CD4-positive, alpha-beta memory T cell (primary cell): ENCODE measurements at regions of chr11 and their contacts with region 1.

Region 1: DNA sequence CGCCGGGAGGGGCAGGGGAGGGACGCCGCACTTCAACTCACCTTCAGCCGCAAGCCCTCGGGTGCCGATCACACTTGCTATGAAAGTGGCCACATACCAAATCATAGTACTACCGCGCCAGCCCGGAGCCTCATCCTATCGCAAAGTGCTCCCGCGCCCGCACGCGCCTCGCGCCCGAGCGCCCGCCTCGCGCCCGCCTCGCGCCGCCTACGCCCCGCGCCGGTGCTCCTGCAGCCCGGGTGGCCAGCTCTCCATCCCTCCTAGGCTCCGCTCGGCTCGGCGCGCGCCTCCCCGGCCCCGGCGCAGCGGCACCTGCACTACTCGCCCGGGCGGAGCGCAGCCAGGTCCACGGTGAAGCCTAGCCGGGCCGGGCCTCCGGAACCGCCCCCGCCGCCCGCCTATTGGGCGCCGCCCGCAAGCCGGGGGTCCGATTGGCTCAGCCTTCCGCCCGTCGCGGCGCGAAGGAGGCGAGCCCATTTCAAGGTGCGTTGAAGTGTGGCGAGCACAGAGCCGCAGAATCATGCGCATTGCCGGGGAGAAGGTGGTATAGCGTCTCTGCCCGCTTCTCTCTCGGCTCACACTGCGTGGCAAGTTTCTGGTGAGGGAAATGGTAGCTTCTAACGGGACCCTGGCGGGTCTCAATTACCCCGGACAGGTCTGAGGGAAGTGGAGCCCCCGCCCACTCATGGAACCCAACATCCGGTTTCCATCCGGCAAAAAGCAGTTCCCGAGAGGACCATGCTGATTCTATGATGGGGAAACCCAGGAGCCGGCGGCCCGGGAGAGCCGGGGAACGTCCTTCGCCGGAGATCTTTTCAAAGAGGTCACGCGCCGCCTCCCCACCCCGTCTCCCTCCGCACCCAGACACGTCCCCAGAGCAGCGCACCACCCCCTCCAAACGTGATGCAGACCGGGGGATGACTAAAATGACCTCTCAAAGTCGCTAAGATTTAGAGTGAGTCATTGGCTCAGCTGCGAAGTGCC is at the start of gene IGSF9B:
- DNase-seq: peak; percentile 89 to 96 (median 92)
- H3K4me3 ChIP-seq: peak within 1 kb of the TSS; percentile 57 to 95
- H3K4me3 Mint-ChIP-seq: peak within 1 kb of the TSS; percentile 89 to 95 (median 92)
- H3K27ac ChIP-seq: peak within 1 kb of the TSS; percentile 58
- H3K27ac Mint-ChIP-seq: peak within 1 kb of the TSS; percentile 84 to 94 (median 90)
- H3K4me1 ChIP-seq: peaks cover 38% of the 10 kb centered on the region
- H3K4me1 Mint-ChIP-seq: peaks cover 24 to 48% (median 40%) of the 10 kb centered on the region in 4 donors
- H3K27me3 ChIP-seq: peaks cover 5% of the 10 kb centered on the region
- H3K27me3 Mint-ChIP-seq: peaks cover 7 to 10% of the 10 kb centered on the region in 2 donors
- total RNA-seq, gene IGSF9B: 36.0 to 38.6 TPM

Region 2: GRCh38 chr11:133966921-133967598 is 10.1 kb after region 1 on chr11:
- CTCF ChIA-PET with region 1: no interaction called
- POLR2A ChIA-PET with region 1: interaction called, 3 read pairs
- intact Hi-C with region 1: loop called (anchors 1 kb)
- DNase-seq: peak; percentile 48 to 64 (median 58)
- H3K4me3 ChIP-seq: peak overlapping the region; percentile 52 to 62
- H3K4me3 Mint-ChIP-seq: peak overlapping the region; percentile 84 to 98 (median 93)
- H3K27ac ChIP-seq: no peak overlapping the region
- H3K27ac Mint-ChIP-seq: peak overlapping the region in 5 of 7 donors; percentile 62 to 95 (median 92)
- H3K4me1 ChIP-seq: peaks cover 8% of the 10 kb centered on the region
- H3K4me1 Mint-ChIP-seq: peaks cover 6 to 13% (median 11%) of the 10 kb centered on the region in 4 donors
- H3K27me3 ChIP-seq: no peaks in the 10 kb centered on the region
- H3K27me3 Mint-ChIP-seq: peaks cover 4 to 8% of the 10 kb centered on the region in 2 donors

Region 3: GRCh38 chr11:134033696-134034491 is 77.0 kb after region 1 on chr11:
- CTCF ChIA-PET with region 1: no interaction called
- POLR2A ChIA-PET with region 1: interaction called, 23 read pairs
- intact Hi-C with region 1: no loop called
- DNase-seq: peak; percentile 36 to 75 (median 50)
- H3K4me3 ChIP-seq: peak overlapping the region in 1 of 2 donors; percentile 29
- H3K4me3 Mint-ChIP-seq: peak overlapping the region in 7 of 8 donors; percentile 57 to 87 (median 70)
- H3K27ac ChIP-seq: peak overlapping the region; percentile 5
- H3K27ac Mint-ChIP-seq: peak overlapping the region; percentile 59 to 87 (median 67)
- H3K4me1 ChIP-seq: peaks cover 50% of the 10 kb centered on the region
- H3K4me1 Mint-ChIP-seq: peaks cover 27 to 70% (median 45%) of the 10 kb centered on the region in 4 donors
- H3K27me3 ChIP-seq: no peaks in the 10 kb centered on the region
- H3K27me3 Mint-ChIP-seq: no peaks in the 10 kb centered on the region

Region 4: GRCh38 chr11:134120143-134120850 is 163.4 kb after region 1 on chr11:
- CTCF ChIA-PET with region 1: no interaction called
- POLR2A ChIA-PET with region 1: no interaction called
- intact Hi-C with region 1: no loop called
- DNase-seq: no peak
- H3K4me3 ChIP-seq: no peak overlapping the region
- H3K4me3 Mint-ChIP-seq: no peak overlapping the region
- H3K27ac ChIP-seq: no peak overlapping the region
- H3K27ac Mint-ChIP-seq: no peak overlapping the region
- H3K4me1 ChIP-seq: no peaks in the 10 kb centered on the region
- H3K4me1 Mint-ChIP-seq: peaks cover 0 to 7% (median 4%) of the 10 kb centered on the region in 4 donors
- H3K27me3 ChIP-seq: no peaks in the 10 kb centered on the region
- H3K27me3 Mint-ChIP-seq: peaks cover 11 to 19% of the 10 kb centered on the region in 2 donors